ENCODE measurements at regions of chr19 and their contacts with region 1.

Region 1: DNA sequence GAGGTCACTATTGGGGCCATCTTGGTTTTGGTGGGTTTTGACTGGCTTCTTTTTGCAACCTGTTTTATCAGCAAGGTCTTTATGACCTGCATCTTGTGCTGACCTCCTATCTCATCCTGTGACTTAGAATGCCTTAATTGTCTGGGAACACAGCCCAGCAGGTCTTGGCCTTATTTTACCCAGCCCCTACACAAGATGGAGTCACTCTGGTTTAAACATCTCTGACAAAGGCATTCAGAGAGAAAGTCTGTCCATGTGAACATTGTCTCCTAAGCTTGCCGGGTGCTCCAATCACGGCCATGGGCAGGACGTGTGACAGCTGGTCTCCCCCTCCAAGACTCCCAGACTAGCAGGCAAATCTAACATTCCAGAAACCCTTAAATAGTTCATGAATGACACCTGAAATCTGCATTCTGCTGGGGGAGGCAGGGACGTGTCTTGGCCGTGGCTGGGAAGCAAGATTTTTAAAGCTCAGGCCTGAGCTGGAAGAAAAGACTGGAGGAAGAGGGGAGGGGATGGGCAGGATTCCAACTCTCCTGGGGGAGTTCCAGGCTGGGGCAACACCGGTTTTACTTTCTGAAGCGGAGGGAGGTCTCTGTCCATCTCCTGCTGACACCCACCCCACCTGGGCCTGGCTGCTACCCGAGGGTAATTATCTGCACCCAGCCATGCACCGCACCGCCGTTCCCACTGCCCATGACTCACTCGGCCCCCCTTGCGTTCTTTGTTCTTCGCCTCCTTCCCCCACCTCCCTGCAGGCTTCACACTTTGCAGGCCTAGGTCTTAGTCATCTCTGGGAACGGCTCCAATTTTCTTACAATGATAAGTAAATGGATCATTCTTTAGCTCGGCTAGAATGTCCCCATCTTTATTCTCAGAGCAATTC is 11.6 kb upstream of the OR1M1 start:
- DNase-seq: peak; percentile 87
- ATAC-seq: peak; percentile 96 to 99

Region 2: DNA sequence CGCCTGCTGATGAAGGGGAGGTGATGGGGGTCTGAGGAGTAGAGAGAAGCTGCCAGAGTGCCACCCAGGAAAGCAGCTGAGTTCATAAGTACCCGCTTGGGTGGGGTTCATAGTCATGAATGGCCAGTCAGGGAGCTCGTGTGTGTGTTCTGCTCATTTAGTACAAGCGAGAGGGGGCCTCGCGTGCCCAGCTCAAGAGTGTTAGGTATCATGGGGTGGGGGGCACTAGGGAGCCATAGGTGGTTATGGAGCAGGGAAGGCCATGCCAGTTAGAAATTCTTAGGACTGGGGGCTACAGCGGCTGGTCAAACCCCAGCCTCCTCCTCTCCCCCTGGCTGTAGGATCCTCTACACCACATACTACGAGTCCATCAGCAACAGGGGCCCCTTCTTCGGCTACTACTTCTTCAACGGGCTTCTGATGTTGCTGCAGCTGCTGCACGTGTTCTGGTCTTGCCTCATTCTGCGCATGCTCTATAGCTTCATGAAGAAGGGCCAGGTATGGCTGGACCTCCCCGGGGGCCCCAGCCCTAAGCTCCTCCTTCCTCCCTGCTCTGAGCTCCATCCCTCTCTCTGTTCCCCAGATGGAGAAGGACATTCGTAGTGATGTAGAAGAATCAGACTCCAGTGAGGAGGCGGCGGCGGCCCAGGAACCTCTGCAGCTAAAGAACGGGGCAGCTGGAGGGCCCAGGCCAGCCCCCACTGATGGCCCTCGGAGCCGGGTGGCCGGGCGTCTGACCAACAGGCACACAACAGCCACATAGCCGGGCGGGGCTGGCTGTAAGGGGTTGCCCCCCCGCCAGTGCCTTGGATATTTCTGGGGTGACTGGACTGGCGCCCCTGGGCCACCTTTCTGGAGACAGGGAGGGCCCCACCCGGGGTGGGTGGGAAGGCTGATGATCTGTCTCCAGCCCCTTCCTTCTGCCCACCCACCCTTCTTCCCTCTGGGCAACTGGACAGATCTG is 813.7 kb before region 1 on chr19:
- intact Hi-C with region 1: loop called in 1 of 2 experiments (anchors 10 kb)
- DNase-seq: no peak
- ATAC-seq: peak in 1 of 2 donors; percentile 7

Region 3: DNA sequence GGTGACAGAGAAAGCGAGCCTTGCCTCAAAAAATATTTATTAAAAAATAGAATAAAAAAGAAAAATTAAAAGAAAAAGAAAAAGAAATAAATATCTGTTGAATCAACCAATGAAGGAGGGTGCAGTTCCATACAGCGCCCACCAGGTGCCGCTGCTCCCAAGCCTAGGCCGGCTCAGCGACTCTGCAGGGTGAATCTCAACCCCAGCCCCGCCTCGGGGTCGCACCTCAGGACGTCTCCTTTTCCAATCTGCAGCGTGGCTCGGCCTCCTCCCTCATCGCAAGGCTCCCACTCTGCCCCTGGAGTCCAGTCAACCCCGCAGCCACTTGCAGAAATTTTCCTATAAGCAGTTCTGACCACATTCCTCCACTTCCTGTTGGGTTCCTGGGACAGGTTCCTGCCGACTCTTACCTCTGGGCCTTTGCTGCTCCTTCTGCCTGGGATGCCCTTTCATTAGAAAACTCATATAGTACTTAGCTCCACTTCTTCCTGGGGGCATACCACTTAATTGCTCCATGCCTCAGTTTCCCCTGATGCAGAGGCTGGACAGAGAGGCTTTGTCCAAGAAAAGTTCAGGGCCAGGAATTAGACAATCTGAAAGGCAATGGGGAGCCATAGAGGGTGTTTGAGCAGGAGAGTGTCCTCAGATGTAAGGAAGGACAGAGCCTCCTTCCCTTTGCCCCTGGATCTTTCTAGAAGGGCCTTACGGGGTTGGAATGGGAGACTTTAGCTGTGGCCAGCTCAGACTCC is 420.5 kb before region 1 on chr19:
- intact Hi-C with region 1: loop called (anchors 2 to 5 kb)
- DNase-seq: peak; percentile 53
- ATAC-seq: peak; percentile 61 to 73

Region 4: GRCh38 chr19:9008667-9009066 is 66.6 kb before region 1 on chr19:
- intact Hi-C with region 1: no loop called
- DNase-seq: no peak
- ATAC-seq: no peak

Region 5: GRCh38 chr19:9039728-9040127 is 35.6 kb before region 1 on chr19:
- intact Hi-C with region 1: no loop called
- DNase-seq: no peak
- ATAC-seq: no peak

Region 6: DNA sequence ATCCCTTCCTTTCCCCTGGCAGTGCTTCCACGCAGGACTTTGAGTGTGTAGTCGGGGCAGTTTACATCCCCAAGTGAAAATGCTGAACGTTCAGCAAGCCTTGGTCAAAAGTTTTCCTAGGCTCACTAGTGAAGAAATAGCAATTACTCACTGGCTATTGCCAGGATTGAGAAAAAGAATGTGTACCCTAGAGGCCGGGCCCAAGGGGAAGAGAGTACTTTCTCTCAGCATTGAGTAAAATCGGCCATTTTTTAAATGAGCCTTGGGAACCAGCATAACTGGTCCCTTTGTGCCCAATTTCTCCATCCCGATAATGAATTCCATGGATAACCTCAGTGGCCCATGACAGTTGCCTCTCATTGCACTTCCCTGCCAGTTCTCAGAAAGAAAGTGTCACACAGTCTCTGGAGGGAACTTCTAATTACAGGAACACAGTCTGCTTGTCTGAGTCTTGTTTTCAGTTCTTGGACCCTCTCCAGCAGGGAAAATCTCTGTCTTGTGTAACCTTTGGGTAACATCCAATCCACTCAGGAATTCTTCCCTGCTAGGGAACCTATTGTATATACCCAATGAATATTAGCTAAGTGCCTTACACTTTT is 96.2 kb after region 1 on chr19:
- intact Hi-C with region 1: no loop called
- DNase-seq: no peak
- ATAC-seq: peak in 1 of 2 donors; percentile 70